Astrocyte of the cerebellum (primary cell): ENCODE measurements at regions of chr3 and their contacts with region 1.

Region 1: GRCh38 chr3:57659806-57660439 is 33.0 kb downstream of the DENND6A start:
- DNase-seq: no peak
- H3K4me3 ChIP-seq: no peak overlapping the region
- CTCF ChIP-seq: no peak

Region 2: GRCh38 chr3:57597122-57597923 is 62.6 kb before region 1 on chr3 and contains the start of gene ARF4:
- in situ Hi-C with region 1: loop called (anchors 5 kb)
- DNase-seq: peak; percentile 99
- H3K4me3 ChIP-seq: peak within 1 kb of the TSS; percentile 89
- CTCF ChIP-seq: peak; percentile 20

Region 3: GRCh38 chr3:57692259-57693147 is 32.6 kb after region 1 on chr3 and contains the start of gene DENND6A:
- in situ Hi-C with region 1: no loop called
- DNase-seq: peak; percentile 84
- H3K4me3 ChIP-seq: peak within 1 kb of the TSS; percentile 71
- CTCF ChIP-seq: no peak

Region 4: DNA sequence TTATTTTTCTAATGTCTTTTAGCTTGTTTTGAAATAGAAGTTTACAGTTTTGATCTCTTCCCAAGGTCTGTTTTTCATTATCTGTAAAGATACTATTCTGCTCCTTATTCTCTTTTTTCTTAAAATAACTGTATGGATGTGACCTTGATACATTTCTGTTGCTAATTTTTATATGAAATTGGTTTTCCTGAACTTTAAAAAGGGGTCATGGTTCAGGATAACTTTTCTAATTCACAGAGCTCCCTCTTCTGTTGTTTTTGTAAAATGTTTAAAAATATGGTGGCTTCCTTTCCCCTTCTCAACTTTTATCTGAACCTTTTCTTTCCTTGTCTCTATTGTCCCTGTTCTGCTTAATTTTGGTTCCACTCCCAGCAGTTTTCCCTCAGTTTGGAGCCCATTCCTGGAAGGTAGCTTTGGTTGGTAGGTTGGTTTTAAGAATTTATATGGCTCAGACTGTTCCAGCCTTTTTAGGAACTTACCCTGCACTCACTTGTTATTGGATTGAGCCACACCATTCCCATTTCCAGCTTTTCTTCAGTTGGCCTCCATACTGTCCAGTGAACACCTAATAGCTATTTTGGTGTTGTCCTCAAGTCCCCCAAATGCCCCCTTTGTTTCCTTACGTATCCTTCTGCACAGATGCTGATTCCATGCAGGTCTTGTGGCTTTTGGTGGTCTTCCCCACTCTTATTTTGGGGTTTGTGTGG is 166.5 kb after region 1 on chr3:
- in situ Hi-C with region 1: loop called (anchors 25 kb)
- DNase-seq: no peak
- H3K4me3 ChIP-seq: no peak overlapping the region
- CTCF ChIP-seq: no peak

Region 5: GRCh38 chr3:58536501-58537411 is 876.8 kb after region 1 on chr3 and contains the start of gene ACOX2:
- in situ Hi-C with region 1: no loop called
- DNase-seq: no peak
- H3K4me3 ChIP-seq: peak within 1 kb of the TSS; percentile 11
- CTCF ChIP-seq: no peak